ENCODE measurements at regions of chr13 and their contacts with region 1.

Region 1: DNA sequence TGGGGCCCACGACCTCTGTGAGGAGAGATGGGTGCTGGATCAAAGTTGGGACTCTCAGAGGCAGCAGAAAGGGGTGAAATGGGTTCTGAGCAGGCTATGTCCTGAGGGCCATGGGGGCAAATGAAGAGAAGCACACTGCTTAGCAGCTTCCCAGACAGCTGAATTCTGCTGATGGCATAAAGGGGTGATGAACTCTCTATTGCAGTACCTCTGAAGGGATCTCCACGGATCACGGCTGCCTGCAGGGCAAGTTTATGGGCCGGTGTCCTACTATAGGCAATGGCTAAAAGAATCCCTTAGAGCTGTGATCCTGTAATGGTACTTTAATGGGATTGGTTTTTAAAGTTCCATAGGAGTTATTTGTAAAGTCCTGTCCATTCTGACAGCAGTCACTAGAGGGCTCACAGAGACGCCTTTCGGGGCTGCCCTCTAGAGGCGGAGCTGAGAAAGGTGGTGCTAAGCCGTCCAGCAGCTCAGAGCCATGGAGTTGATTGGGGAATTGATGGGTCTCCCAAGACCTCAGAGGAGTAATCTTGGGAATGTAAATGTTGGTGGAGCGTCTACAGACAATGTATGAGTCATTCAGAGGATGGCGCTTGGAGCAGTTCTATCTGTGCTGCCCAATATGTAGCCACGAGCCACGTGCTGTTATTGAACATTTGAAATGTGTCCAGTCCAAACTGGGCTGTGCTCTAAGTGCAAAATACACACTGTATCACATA is 287.3 kb downstream of the COG6 start:
- DNase-seq: peak; percentile 58 to 76
- ATAC-seq: peak; percentile 99 to 100
- H3K4me3 ChIP-seq: no peak overlapping the region
- H3K27ac ChIP-seq: no peak overlapping the region
- H3K4me1 ChIP-seq: no peaks in the 10 kb centered on the region
- CTCF ChIP-seq: peak; percentile 91
- EP300 ChIP-seq: no peak
- POLR2A ChIP-seq: no peak
- RAD21 ChIP-seq: peak; percentile 70 to 75

Region 2: DNA sequence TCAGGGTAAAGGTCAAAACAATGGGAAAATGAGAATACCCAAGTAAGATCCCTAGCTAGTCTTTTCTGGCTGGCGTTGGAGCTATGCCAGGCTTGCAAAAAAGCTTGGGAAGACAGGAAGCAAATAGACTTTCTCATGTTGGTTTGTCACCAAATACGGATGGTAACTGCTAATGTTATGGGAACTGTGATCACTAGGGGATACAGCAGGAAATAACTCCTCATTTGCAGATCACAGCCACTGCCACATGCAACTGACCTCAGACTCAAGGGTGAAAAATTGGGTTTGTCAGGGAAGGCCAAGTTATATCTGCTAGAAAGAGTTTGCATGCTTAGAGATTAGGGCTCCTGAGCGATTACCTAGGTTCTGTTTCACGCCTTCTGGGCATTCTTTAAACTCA is 741.5 kb before region 1 on chr13:
- CTCF ChIA-PET with region 1: no interaction called
- POLR2A ChIA-PET with region 1: no interaction called
- DNase-seq: no peak
- ATAC-seq: no peak
- H3K4me3 ChIP-seq: no peak overlapping the region
- H3K27ac ChIP-seq: no peak overlapping the region
- H3K4me1 ChIP-seq: no peaks in the 10 kb centered on the region
- CTCF ChIP-seq: no peak
- EP300 ChIP-seq: no peak
- POLR2A ChIP-seq: no peak
- RAD21 ChIP-seq: no peak

Region 3: DNA sequence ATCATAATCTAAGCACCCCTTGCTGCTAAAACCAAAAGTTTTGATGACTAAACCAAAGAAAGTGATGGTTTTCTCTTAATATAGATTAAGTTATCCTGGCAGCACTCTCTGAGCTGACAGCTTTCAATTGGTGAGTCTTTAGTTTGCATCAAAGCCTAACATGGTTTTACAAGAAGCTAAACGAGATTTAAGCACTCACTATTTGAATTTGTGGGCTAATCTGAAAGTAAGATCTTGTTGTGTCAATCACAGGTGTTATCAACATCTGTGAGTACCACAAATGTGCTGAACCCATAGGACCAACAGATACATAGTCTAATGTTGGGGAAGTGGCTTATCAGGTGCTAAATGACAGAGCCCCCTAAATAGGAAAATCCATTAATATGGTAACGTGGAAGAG is 563.6 kb before region 1 on chr13:
- CTCF ChIA-PET with region 1: no interaction called
- POLR2A ChIA-PET with region 1: no interaction called
- DNase-seq: no peak
- ATAC-seq: no peak
- H3K4me3 ChIP-seq: no peak overlapping the region
- H3K27ac ChIP-seq: no peak overlapping the region
- H3K4me1 ChIP-seq: no peaks in the 10 kb centered on the region
- CTCF ChIP-seq: no peak
- EP300 ChIP-seq: no peak
- POLR2A ChIP-seq: no peak
- RAD21 ChIP-seq: no peak

Region 4: DNA sequence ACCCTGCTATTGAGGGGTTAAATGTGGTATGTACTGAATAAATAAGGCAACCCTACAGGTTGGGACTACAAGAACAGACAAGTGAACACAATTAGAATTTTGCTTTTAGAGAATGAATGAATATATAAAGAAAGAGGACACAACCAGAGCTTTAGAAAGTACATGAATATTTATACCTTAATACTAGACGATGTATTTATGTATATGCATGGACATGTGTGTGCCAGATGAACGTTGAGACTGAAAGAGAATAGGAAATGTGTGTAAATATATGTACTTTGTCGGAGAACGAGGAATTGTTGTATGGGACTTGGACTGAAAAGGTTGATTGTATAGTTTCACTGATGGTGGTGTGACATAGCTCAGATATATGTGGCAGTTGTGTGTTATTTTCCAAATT is 296.6 kb before region 1 on chr13:
- CTCF ChIA-PET with region 1: no interaction called
- POLR2A ChIA-PET with region 1: no interaction called
- DNase-seq: no peak
- ATAC-seq: no peak
- H3K4me3 ChIP-seq: no peak overlapping the region
- H3K27ac ChIP-seq: no peak overlapping the region
- H3K4me1 ChIP-seq: no peaks in the 10 kb centered on the region
- CTCF ChIP-seq: no peak
- EP300 ChIP-seq: no peak
- POLR2A ChIP-seq: no peak
- RAD21 ChIP-seq: no peak

Region 5: GRCh38 chr13:39956036-39956435 is 13.3 kb after region 1 on chr13:
- CTCF ChIA-PET with region 1: interaction called, 12 read pairs
- POLR2A ChIA-PET with region 1: no interaction called
- DNase-seq: no peak
- ATAC-seq: no peak
- H3K4me3 ChIP-seq: no peak overlapping the region
- H3K27ac ChIP-seq: no peak overlapping the region
- H3K4me1 ChIP-seq: no peaks in the 10 kb centered on the region
- CTCF ChIP-seq: no peak
- EP300 ChIP-seq: no peak
- POLR2A ChIP-seq: no peak
- RAD21 ChIP-seq: no peak

Measured in A549 (cell line).